ENCODE measurements at regions of chr5 and their contacts with region 1.

Region 1: DNA sequence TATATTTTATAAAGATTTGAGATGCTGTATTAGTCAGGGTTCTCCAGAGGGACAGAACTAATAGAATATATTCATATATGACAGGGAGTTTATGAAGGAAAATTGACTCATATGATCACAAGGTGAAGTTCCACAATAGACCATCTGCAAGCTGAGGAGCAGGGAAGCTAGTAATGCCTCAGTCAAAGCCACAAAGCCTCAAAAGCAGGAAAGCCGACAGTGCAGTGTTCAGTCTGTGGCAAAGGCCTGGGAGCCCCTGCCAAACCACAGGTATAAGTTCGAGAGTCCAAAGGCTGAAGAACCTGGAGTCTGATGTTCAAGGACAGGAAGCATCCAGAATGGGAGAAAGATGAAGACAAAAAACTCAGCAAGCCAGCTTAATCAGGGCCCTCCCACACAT is 382.2 kb downstream of the LRRC70 start:
- DNase-seq: no peak

Region 2: DNA sequence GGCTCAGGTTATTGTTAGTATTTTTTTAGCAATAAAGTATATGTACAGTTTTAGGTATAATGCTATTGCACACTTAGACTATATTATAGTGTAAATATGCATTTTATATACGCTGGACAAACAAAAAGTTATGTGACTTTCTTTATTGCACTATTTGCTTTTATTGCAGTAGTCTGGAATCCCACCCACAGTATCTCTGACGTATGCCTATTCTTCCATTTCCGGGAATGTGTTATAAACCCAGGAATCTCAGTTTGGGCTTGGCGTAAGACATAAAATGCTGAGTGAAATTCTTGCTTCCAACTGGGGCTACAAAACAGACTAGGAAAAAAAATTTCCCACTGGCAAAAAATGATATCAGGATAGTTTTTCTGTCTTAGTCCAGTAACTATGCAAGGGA is 882.4 kb after region 1 on chr5:
- intact Hi-C with region 1: loop called in 1 of 2 experiments (anchors 5 kb)
- DNase-seq: no peak

Measured in posterior vena cava (tissue), 2 donors.